Transverse colon (tissue), 4 donors: ENCODE measurements at regions of chr10 and their contacts with region 1.

Region 1: DNA sequence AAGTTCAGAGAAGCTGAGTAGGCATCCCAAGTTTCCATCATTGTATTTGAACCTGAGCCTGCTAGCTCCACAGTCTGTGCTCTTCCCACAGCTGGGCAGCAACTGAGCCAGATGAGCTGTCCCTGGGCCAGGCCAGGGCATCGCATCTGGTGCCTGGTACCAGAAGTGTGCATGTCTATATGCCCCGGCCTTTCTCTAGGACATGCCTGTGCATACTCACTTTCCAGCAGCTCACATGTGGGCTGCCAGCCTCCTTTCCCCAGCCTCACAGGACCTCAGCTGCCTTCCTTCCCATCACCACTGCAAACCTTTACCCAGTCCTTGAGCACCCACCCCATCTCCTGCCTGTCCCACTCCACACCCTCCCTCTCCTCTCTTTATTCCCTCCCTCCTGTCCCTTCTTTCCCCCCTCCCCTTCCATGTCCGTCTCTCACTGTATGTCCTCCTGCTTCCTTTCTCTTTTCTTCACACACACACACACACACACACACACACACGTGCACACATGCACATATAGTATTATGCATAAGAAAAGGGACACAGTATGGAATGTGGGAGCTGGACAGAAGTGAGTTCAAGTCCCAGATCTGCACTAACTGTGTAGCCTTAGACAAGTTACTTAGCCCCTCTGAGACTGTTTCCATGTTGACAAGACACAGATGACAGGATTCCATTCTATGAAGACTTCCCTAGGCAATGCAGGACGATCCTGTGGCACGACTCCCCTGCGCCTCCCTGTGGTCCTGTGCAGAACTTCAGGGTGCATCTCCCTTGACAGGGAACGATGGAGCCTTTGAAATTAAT is 10.9 kb downstream of the CDHR1 start:
- DNase-seq: peak; percentile 81
- H3K4me3 ChIP-seq: no peak overlapping the region
- H3K27ac ChIP-seq: no peak overlapping the region
- H3K4me1 ChIP-seq: peaks cover 3 to 18% (median 11%) of the 10 kb centered on the region in 4 donors
- H3K27me3 ChIP-seq: no peaks in the 10 kb centered on the region
- CTCF ChIP-seq: peak; percentile 71 to 87 (median 85)
- EP300 ChIP-seq: no peak
- POLR2A ChIP-seq: no peak

Region 2: DNA sequence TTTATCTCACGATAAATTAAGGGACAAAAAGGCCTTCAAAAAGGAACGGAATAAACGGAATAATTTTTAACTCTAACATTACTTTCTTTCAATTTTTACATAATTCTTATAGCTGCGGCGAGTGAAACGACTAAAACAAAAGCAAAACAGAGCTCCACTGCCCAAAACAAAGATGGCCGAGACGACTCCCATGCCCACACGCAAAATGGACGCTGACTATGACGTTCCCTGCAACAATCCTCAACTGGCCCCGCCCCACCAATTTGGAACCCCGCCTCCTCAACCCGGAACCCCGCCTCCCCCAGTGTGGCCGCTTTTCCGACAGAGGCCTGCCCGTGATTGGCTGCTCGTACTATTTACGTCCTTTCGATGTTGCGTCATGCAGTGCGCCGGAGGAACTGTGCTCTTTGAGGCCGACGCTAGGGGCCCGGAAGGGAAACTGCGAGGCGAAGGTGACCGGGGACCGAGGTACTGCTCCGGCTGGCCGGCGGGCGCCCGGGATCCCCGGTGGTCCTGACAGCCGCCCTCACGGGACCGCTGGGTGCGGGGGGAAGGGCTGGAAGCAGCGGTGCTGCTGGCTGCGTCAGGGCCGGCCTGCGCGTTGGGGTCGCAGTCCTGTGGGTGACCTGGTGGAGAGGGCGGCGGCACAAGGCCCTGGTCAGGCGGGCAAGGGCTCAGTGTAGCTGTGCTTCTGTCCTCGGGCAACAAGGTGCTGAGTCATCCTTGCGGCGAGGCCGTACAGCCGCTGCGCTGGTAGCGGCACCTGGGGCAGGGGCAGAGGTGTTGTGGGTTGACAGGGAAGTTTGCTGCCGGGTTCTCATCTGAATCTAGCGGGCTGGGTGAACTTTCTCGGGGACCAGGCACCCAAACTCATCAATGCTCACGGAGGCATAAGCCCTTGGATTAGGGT is 65.9 kb before region 1 on chr10 and contains the start of gene GHITM:
- in situ Hi-C with region 1: loop called in 2 of 4 experiments (anchors 10 kb)
- intact Hi-C with region 1: no loop called
- DNase-seq: peak; percentile 100
- H3K4me3 ChIP-seq: peak within 1 kb of the TSS; percentile 68 to 95 (median 82)
- H3K27ac ChIP-seq: peak within 1 kb of the TSS; percentile 94 to 97 (median 97)
- H3K4me1 ChIP-seq: peaks cover 9 to 46% (median 29%) of the 10 kb centered on the region in 4 donors
- H3K27me3 ChIP-seq: no peaks in the 10 kb centered on the region
- CTCF ChIP-seq: peak; percentile 39 to 94 (median 50)
- EP300 ChIP-seq: peak; percentile 17
- POLR2A ChIP-seq: peak; percentile 98
- total RNA-seq, gene GHITM: 134 to 351 (median 225) TPM

Region 3: DNA sequence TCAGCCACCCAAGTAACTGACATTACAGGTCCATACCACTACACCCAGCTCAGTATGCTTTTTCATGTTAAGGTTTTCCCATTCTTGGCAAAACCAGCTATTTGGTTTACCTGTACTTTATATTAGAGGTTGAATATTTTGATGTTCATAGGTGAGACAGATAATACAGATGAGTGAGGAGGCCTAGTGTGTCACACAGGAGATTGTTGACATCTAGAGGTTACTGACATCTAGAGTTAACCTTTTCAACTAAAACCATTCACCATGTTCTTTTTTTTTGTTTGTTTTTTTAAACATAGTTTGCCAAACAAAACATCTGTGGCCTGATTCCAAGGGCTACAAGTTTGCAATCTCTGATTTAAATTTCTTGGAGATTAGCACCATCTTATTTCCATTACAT is 57.9 kb before region 1 on chr10:
- in situ Hi-C with region 1: loop called in 3 of 4 experiments (anchors 5 to 10 kb)
- intact Hi-C with region 1: no loop called
- DNase-seq: no peak
- H3K4me3 ChIP-seq: no peak overlapping the region
- H3K27ac ChIP-seq: no peak overlapping the region
- H3K4me1 ChIP-seq: no peaks in the 10 kb centered on the region
- H3K27me3 ChIP-seq: no peaks in the 10 kb centered on the region
- CTCF ChIP-seq: no peak
- EP300 ChIP-seq: no peak
- POLR2A ChIP-seq: no peak

Region 4: DNA sequence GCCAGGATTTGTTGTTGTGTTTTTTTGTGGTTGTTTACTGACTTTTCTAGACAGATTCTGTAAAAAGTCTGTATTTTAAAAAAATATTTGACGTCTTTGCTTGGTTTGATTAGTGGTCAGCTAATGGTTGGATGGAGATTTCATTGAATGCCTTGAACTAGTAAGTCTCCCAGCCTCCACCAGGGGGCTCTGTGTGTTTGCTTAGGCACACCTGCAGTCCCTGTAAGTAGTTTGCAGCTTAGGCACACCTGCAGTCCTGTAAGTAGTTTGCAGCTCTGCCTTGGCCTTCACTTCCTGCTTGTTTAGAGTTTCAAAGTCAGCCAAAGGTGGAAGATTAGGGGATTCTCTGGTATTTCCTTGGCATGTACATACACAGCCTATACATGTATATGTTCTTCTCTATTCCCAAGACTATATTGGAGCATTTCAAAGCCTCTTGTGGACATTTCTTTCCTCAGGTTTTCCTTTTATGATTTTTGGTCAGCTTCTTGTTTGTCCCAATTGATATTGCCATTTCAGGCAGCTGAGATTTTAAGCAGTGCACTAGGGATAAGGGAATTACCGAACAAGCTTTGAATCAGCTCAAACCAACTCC is 224.8 kb after region 1 on chr10:
- in situ Hi-C with region 1: no loop called
- intact Hi-C with region 1: no loop called
- DNase-seq: peak; percentile 79
- H3K4me3 ChIP-seq: no peak overlapping the region
- H3K27ac ChIP-seq: peak overlapping the region in 1 of 4 donors; percentile 3
- H3K4me1 ChIP-seq: peaks cover 3 to 30% (median 13%) of the 10 kb centered on the region in 4 donors
- H3K27me3 ChIP-seq: no peaks in the 10 kb centered on the region
- CTCF ChIP-seq: peak; percentile 63 to 69 (median 65)
- EP300 ChIP-seq: no peak
- POLR2A ChIP-seq: no peak